Endothelial cell of umbilical vein (primary cell): ENCODE measurements at regions of chr11 and their contacts with region 1.

Region 1: GRCh38 chr11:90113541-90113940 is 20.9 kb upstream of the NAALAD2 start:
- DNase-seq: peak; percentile 20
- H3K4me3 ChIP-seq: no peak overlapping the region
- H3K27ac ChIP-seq: no peak overlapping the region
- H3K4me1 ChIP-seq: no peaks in the 10 kb centered on the region
- H3K27me3 ChIP-seq: peaks cover 0 to 2% of the 10 kb centered on the region in 2 experiments
- CTCF ChIP-seq: peak in 1 of 2 donors; percentile 15
- POLR2A ChIP-seq: no peak

Region 2: GRCh38 chr11:89667001-89667400 is 446.5 kb before region 1 on chr11:
- CTCF ChIA-PET with region 1: interaction called, 3 read pairs
- POLR2A ChIA-PET with region 1: no interaction called
- dilution Hi-C with region 1: no loop called
- intact Hi-C with region 1: loop called (anchors 10 kb)
- DNase-seq: no peak
- H3K4me3 ChIP-seq: no peak overlapping the region
- H3K27ac ChIP-seq: no peak overlapping the region
- H3K4me1 ChIP-seq: no peaks in the 10 kb centered on the region
- H3K27me3 ChIP-seq: no peaks in the 10 kb centered on the region
- CTCF ChIP-seq: no peak
- POLR2A ChIP-seq: no peak

Region 3: DNA sequence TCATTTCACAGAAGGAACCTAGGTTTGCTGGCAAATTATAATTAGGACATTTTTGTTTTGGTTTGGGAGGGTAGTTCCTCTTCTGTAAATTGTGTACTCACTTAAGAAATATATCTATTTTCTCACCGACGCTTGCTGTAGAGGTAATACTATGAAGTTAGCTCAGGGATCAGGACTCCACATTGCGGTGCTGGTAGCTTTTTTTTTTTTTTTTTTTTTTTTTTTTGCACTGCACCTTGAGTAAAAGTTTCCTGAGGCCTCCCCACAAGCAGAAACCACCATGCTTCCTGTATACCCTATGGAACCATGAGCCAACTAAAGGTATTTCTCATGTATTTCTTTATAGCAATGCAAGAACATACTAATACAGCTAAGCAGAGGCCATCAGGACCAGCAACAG is 13.1 kb before region 1 on chr11:
- CTCF ChIA-PET with region 1: interaction called, 10 read pairs
- POLR2A ChIA-PET with region 1: no interaction called
- dilution Hi-C with region 1: no loop called
- intact Hi-C with region 1: no loop called
- DNase-seq: no peak
- H3K4me3 ChIP-seq: no peak overlapping the region
- H3K27ac ChIP-seq: no peak overlapping the region
- H3K4me1 ChIP-seq: no peaks in the 10 kb centered on the region
- H3K27me3 ChIP-seq: no peaks in the 10 kb centered on the region
- CTCF ChIP-seq: no peak
- POLR2A ChIP-seq: no peak

Region 4: GRCh38 chr11:90176069-90176468 is 62.5 kb after region 1 on chr11:
- CTCF ChIA-PET with region 1: no interaction called
- POLR2A ChIA-PET with region 1: no interaction called
- dilution Hi-C with region 1: no loop called
- intact Hi-C with region 1: no loop called
- DNase-seq: peak; percentile 26
- H3K4me3 ChIP-seq: no peak overlapping the region
- H3K27ac ChIP-seq: no peak overlapping the region
- H3K4me1 ChIP-seq: peaks cover 6% of the 10 kb centered on the region
- H3K27me3 ChIP-seq: no peaks in the 10 kb centered on the region
- CTCF ChIP-seq: no peak
- POLR2A ChIP-seq: no peak